Breast epithelium (tissue), 4 donors: ENCODE measurements at regions of chr7 and their contacts with region 1.

Region 1: DNA sequence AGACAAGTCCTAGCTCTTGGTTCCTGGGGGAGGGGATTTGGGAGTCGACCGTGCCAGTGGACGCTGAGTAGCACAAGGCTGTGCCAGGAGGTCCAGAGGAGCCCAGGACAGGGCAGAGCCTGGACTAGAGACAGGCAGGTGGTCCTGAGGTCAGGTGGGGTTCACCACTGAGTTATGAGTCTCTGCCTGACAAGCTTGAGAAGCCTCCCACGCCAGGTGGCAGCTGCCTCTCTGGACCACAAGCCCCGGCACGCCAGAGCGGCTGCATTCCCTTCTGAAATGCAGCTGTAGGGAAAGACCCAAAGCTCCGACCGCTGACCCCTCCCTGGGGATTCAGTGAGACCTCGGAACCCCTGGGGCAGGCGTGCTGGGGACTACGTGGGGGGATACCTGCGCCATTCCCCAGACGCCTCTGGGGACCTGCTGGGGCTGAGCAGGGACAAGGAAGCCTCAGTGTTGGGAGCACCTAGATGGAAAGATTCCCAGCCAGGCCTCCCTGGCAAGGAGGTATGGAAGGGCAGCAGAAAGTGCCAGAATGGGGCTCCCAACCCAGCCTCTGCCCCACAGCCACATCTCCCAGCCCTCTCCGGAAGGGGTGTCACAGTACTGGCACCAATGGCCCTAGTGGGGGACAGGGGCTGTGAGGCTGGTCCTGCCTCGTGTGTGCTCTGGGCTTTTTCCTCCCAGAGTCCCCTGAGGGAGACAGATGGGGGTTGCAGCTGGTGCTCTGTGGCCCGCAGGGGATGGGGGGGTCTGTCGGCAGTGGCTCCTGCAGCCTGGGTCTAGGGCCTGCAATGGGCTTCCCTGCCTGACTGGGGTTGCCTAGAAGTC is 29.0 kb downstream of the PDGFA start:
- DNase-seq: peak in 1 of 2 donors; percentile 83
- H3K4me3 ChIP-seq: no peak overlapping the region
- H3K27ac ChIP-seq: peak overlapping the region; percentile 80 to 83
- H3K4me1 ChIP-seq: no peaks in the 10 kb centered on the region
- H3K27me3 ChIP-seq: no peaks in the 10 kb centered on the region
- CTCF ChIP-seq: no peak
- POLR2A ChIP-seq: no peak

Region 2: DNA sequence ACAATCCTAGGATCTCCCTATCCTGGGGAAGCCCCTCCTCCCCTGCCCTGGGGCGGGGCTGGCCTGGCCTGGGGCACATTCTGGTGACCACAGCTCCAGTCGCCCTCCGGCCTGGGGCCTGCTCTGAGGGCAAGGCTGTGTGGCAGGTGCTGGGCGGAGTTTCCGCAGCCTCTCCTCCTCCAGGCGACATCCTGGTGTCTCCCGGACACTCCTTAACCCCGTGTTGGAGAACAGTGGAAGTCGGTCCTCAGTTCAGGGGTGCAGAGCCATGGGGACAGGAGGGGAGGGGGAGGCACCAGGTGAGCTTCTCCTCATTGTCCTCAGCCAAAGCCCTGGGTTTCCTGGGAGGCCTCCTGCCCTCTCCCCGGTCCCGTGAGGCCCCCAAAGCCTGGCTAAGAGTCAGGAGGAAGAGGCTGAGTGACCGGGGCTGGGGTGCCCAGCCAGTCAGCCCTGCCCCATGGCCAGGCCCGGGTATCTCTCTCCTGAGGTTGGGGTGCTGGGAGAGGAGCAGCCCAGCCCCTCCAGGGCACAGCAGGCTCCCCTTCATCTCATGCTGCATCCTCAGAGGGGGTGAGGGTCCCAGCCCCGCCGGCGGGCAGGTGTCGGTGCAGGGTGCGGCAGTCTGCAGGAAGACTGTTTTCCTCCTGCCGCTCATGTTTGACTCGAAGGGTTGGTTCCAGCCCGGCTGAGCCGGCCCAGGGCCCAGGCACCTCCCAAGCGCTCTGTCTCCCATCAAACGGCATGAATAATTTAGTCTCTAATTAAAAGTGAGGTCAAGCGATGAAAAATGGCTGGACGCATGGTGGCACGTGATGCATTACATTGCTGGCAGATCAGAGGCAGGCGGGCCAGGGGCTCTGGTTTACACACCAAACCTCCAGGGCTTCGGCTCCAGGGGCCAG is 764.7 kb after region 1 on chr7:
- intact Hi-C with region 1: no loop called
- DNase-seq: no peak
- H3K4me3 ChIP-seq: no peak overlapping the region
- H3K27ac ChIP-seq: no peak overlapping the region
- H3K4me1 ChIP-seq: no peaks in the 10 kb centered on the region
- H3K27me3 ChIP-seq: peaks cover 3 to 91% of the 10 kb centered on the region in 2 donors
- CTCF ChIP-seq: no peak
- POLR2A ChIP-seq: no peak

Region 3: GRCh38 chr7:2063575-2064257 is 1573.0 kb after region 1 on chr7:
- intact Hi-C with region 1: loop called (anchors 10 kb)
- DNase-seq: no peak
- H3K4me3 ChIP-seq: no peak overlapping the region
- H3K27ac ChIP-seq: no peak overlapping the region
- H3K4me1 ChIP-seq: no peaks in the 10 kb centered on the region
- H3K27me3 ChIP-seq: no peaks in the 10 kb centered on the region
- CTCF ChIP-seq: no peak
- POLR2A ChIP-seq: no peak